ENCODE measurements at regions of chr16 and their contacts with region 1.

Region 1: DNA sequence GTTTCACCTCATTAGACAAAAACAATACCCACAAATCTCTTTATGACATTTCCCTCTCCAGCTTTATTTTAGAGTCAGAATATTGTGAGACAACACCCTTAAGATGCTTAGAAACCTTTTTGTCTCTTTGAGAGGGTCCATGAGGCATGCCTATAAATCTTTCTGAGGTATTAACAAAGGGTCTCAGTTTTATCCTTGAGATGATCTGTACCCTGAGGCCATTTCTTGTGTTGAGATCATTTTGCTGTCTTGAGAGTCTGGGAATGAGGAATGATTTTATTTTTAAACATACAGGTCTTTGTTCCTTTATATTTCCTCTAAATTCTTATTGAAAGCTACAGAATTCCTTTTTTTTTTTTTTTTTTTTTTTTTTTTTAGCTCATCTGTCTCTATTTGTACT is 179.7 kb upstream of the HS3ST4 start:
- DNase-seq: no peak
- H3K4me3 ChIP-seq: no peak overlapping the region
- H3K27ac ChIP-seq: no peak overlapping the region
- H3K4me1 ChIP-seq: no peaks in the 10 kb centered on the region
- H3K27me3 ChIP-seq: no peaks in the 10 kb centered on the region
- CTCF ChIP-seq: no peak

Region 2: DNA sequence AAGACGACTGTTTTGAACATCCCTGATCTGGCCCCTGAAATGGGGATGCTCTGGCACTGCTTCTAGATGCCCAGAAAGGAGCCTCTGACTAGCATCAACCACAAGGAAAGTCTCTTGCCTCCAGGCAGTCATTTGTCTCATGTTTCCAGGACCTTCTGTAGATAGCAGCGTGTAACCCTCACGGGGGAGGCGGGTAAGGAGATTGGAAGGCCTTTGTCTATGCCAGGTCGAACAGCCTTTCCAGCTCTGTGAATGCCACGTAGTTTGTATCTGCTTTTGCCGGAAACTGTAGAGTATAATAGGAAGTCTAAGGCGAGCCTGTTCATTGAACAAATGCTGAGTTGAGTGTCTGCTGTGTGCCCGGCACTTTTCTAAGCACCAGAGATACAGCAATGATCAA is 339.2 kb before region 1 on chr16:
- CTCF ChIA-PET with region 1: no interaction called
- POLR2A ChIA-PET with region 1: no interaction called
- intact Hi-C with region 1: no loop called
- DNase-seq: no peak
- H3K4me3 ChIP-seq: no peak overlapping the region
- H3K27ac ChIP-seq: no peak overlapping the region
- H3K4me1 ChIP-seq: no peaks in the 10 kb centered on the region
- H3K27me3 ChIP-seq: no peaks in the 10 kb centered on the region
- CTCF ChIP-seq: no peak

Region 3: DNA sequence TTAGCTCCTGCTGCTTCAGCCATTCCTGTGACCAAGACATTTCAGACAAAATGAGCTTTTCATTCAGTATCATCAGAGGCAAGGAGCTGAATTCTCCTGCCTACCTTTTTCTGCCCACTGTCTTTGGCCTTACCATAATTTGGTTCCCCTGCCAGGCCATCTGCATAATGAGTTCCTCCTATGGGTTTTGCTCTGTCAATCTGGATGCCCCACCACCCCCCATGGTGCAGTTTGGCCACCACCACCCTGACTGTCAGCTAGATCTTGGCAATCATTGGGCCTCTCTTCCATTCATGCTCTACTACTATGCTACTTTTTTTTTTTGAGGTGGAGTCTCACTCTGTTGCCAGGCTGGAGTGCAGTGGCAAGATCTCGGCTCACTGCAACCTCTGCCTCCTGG is 85.2 kb before region 1 on chr16:
- CTCF ChIA-PET with region 1: no interaction called
- POLR2A ChIA-PET with region 1: interaction called, 11 read pairs
- intact Hi-C with region 1: no loop called
- DNase-seq: no peak
- H3K4me3 ChIP-seq: no peak overlapping the region
- H3K27ac ChIP-seq: no peak overlapping the region
- H3K4me1 ChIP-seq: peaks cover 4% of the 10 kb centered on the region
- H3K27me3 ChIP-seq: no peaks in the 10 kb centered on the region
- CTCF ChIP-seq: no peak

Region 4: GRCh38 chr16:25449802-25450201 is 62.2 kb before region 1 on chr16:
- CTCF ChIA-PET with region 1: no interaction called
- POLR2A ChIA-PET with region 1: no interaction called
- intact Hi-C with region 1: no loop called
- DNase-seq: no peak
- H3K4me3 ChIP-seq: no peak overlapping the region
- H3K27ac ChIP-seq: no peak overlapping the region
- H3K4me1 ChIP-seq: no peaks in the 10 kb centered on the region
- H3K27me3 ChIP-seq: no peaks in the 10 kb centered on the region
- CTCF ChIP-seq: no peak

Measured in A673 (cell line).